HepG2 (cell line): ENCODE measurements at regions of chr7 and their contacts with region 1.

Region 1: GRCh38 chr7:73667344-73668102 is at the start of gene VPS37D:
- DNase-seq: peak; percentile 67
- ATAC-seq: peak; percentile 71
- H3K4me3 ChIP-seq: peak within 1 kb of the TSS; percentile 68 to 84 (median 77)
- H3K27ac ChIP-seq: peak within 1 kb of the TSS; percentile 94
- H3K4me1 ChIP-seq: peaks cover 48% of the 10 kb centered on the region
- H3K27me3 ChIP-seq: no peaks in the 10 kb centered on the region; a peak in 1 of 5 replicates
- CTCF ChIP-seq: peak; percentile 79
- EP300 ChIP-seq: no peak
- POLR2A ChIP-seq: no peak
- RAD21 ChIP-seq: peak; percentile 97
- total RNA-seq, gene VPS37D: 4.9 and 6.3 TPM in 2 replicates

Region 2: DNA sequence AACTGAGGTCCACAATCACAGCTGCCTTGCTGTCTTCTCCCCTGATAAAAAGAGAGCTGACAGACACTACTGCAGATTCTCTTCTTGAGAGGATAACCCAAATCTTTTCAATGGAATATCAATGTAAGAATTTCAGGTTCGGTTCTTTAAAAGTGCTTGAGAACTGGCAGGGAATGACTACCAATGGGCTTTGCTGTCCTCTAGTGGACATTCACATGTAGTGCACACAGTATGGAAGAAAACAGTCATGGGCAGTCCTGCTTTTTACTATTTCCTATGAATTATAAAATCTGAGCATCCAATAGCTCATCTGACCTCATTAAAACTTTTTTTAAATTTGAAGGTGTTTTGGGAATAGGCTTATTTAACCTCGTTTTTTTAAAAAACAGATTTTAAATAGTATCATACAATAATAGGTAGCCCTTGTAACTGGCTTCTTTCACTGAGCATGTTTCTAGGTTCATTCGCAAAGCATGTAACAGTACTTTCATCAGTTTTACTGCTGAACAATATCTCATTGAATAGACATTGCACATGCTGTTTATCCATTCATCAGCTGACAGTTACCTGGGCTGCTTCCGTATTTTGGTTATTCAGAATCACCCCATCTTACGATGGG is 215.6 kb before region 1 on chr7:
- CTCF ChIA-PET with region 1: no interaction called
- POLR2A ChIA-PET with region 1: no interaction called
- in situ Hi-C with region 1: no loop called
- intact Hi-C with region 1: no loop called
- DNase-seq: peak; percentile 57
- ATAC-seq: peak; percentile 51
- H3K4me3 ChIP-seq: no peak overlapping the region
- H3K27ac ChIP-seq: no peak overlapping the region
- H3K4me1 ChIP-seq: peaks cover 28% of the 10 kb centered on the region
- H3K27me3 ChIP-seq: no peaks in the 10 kb centered on the region
- CTCF ChIP-seq: peak; percentile 86
- EP300 ChIP-seq: no peak
- POLR2A ChIP-seq: no peak
- RAD21 ChIP-seq: peak; percentile 88

Region 3: DNA sequence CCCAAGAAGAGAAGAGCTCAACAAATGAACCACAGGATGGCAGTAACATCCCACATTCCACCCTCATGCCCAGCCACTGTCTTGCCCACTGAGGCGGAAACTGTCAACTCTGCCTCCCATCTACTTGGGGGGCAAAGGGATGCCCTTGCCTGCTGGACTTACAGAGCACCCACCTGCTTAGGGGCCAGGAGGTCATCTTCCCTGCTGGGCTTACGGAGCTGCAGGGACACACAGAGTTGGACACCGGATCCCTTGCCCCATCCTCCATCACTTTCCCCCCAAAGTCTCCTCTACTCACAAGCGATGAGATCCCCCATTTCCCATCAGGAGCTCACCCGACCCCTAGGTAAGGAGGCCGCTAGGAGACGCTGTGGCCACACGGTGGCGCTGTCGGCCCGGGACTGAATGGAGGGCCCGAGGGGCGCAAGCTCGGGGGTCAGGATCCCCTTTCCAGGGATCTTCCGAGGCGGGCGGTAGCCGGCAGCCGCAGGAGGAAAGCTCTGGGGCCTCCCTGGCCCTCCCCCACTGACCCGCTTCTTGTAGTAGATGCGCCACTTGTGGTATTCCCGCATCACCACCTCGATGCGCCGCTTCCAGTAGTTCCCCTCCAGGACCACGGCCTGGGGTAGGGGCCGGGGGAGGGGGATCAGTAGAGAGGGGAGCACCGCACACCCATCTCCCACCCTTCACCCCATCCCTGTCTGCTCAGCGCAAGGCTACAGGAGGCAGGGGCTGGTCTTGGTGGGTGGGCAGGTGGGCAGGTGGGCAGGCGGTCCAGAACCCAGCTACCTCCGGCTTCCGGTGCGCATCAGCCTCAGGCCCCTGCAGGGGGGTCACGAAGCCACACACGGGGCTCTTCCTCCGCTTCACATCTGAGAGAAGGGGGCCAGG is 60.5 kb before region 1 on chr7:
- CTCF ChIA-PET with region 1: interaction called, 12 read pairs
- POLR2A ChIA-PET with region 1: interaction called, 3 read pairs
- in situ Hi-C with region 1: loop called (anchors 5 kb)
- intact Hi-C with region 1: loop called (anchors 2 kb)
- DNase-seq: peak; percentile 33
- ATAC-seq: peak; percentile 40
- H3K4me3 ChIP-seq: no peak overlapping the region
- H3K27ac ChIP-seq: no peak overlapping the region
- H3K4me1 ChIP-seq: peaks cover 42% of the 10 kb centered on the region
- H3K27me3 ChIP-seq: no peaks in the 10 kb centered on the region
- CTCF ChIP-seq: peak; percentile 91
- EP300 ChIP-seq: no peak
- POLR2A ChIP-seq: peak in 1 of 2 experiments; percentile 25; a peak in 2 of 4 replicates
- RAD21 ChIP-seq: peak; percentile 88

Region 4: GRCh38 chr7:73612598-73613269 is 54.8 kb before region 1 on chr7:
- CTCF ChIA-PET with region 1: interaction called, 12 read pairs
- POLR2A ChIA-PET with region 1: interaction called, 10 read pairs
- in situ Hi-C with region 1: loop called (anchors 5 kb)
- intact Hi-C with region 1: loop called (anchors 2 kb)
- DNase-seq: peak; percentile 99
- ATAC-seq: peak; percentile 80
- H3K4me3 ChIP-seq: peak overlapping the region in 1 of 3 experiments; percentile 6; a peak in 1 of 6 replicates
- H3K27ac ChIP-seq: peak overlapping the region; percentile 76
- H3K4me1 ChIP-seq: peaks cover 98% of the 10 kb centered on the region
- H3K27me3 ChIP-seq: no peaks in the 10 kb centered on the region
- CTCF ChIP-seq: peak; percentile 65
- EP300 ChIP-seq: peak; percentile 75 to 94; a peak in 3 of 4 replicates
- POLR2A ChIP-seq: peak; percentile 29 to 41; a peak in 2 of 4 replicates
- RAD21 ChIP-seq: peak; percentile 73

Region 5: DNA sequence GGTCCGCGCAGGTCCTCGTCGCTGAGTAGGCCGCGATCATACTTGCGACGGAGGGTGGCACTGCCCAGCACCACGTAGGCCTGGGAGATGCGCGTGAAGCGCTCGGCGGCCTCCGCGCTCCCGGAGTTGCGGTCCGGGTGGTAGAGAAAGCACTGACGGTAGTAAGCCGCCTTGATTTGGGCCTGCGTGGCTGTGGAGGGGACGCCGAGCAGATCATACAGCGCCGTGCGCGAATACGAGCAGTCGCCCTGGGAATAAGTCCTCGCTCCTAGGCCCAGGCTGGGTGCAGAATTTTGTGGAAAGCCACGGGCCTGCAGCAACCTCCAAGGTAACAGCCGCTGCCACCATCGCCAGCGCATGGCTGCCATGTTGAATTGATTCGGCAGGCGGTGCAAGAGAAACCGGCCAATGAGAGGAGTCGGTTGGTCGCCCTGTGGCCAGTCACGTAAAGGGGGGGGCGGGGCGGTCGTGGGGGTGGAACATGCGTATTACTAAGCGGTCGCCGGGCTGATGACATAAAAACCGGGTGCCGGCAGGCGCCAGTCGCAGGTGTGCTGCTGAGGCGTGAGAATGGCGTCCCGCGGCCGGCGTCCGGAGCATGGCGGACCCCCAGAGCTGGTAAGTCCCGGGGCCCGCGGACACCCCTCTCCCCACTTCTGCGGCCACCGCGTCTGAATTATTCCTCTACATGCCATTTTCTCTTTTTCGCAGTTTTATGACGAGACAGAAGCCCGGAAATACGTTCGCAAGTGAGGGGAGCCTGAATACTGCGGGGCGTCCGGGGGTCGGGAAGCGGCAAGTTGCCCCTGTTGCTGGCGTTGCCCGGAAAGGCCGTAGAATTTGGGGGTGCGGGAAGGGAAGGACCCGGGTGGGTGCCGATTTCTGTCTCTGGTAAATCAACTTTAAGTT is 15.8 kb after region 1 on chr7 and contains the starts of genes BUD23 and DNAJC30:
- CTCF ChIA-PET with region 1: no interaction called
- POLR2A ChIA-PET with region 1: interaction called, 3 read pairs
- in situ Hi-C with region 1: no loop called
- intact Hi-C with region 1: loop called (anchors 2 kb)
- DNase-seq: peak; percentile 91
- ATAC-seq: peak; percentile 92
- H3K4me3 ChIP-seq: peak within 1 kb of the TSS; percentile 91 to 94 (median 92)
- H3K27ac ChIP-seq: peak within 1 kb of the TSS; percentile 75
- H3K4me1 ChIP-seq: peaks cover 39% of the 10 kb centered on the region
- H3K27me3 ChIP-seq: no peaks in the 10 kb centered on the region; a peak in 1 of 5 replicates
- CTCF ChIP-seq: no peak
- EP300 ChIP-seq: no peak
- POLR2A ChIP-seq: peak; percentile 89 to 90
- RAD21 ChIP-seq: no peak; the same call in 1 of the 2 replicates
- total RNA-seq, gene BUD23: 37.5 and 47.5 TPM in 2 replicates
- total RNA-seq, gene DNAJC30: 3.0 and 3.3 TPM in 2 replicates

Region 6: DNA sequence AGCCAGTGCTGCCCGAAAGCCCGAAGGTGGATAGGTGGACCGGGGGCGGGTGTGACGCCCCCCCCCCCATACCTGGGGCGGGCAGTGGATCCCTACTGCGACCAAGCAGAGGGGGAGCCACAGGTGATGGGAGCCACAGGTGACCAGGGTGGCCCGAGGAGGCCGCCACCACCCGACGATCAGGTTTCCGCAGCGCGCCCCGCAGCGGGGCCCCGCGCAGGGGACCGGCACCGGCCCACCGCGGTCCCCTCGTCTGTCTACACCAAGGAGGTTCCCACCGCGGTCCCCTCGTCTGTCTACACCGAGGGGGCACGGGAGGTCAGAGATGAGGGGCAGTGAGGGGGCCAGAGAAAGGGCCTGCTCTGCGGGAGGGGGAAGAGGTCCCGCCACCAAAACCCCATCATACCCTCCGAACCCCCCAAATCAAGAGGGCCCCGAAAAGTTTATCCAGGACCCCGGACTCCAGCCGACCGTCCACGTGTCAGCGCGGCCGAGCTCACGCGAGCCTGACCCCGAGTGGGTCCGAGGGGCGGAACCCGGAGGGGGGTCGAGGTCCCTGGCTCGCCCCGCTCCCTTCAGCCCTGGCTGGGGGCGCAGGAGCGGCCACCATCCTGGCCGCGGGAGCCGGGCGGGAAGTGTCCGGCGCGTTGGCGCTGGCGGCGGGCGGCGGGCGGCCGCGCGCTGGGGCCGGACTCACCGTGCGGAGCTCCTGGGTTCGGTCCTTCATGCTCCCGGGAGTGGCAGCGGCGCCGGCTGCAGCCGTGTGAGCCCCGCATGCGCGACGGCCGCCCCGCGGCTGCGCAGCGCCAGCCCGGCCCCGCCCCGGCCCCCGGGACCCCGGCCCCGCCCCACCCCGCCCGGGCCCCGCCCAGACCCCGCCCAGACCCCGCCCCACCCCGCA is 51.6 kb after region 1 on chr7 and contains the start of gene STX1A:
- CTCF ChIA-PET with region 1: no interaction called
- POLR2A ChIA-PET with region 1: interaction called, 5 read pairs
- in situ Hi-C with region 1: no loop called
- intact Hi-C with region 1: loop called (anchors 5 kb)
- DNase-seq: peak; percentile 40
- ATAC-seq: peak; percentile 67
- H3K4me3 ChIP-seq: peak within 1 kb of the TSS; percentile 76 to 87 (median 87)
- H3K27ac ChIP-seq: no peak within 1 kb of the TSS
- H3K4me1 ChIP-seq: peaks cover 47% of the 10 kb centered on the region
- H3K27me3 ChIP-seq: peaks cover 0 to 1% of the 10 kb centered on the region in 2 experiments; a peak in 1 of 5 replicates
- CTCF ChIP-seq: no peak
- EP300 ChIP-seq: no peak
- POLR2A ChIP-seq: peak in 1 of 2 experiments; percentile 67; a peak in 1 of 4 replicates
- RAD21 ChIP-seq: 0 out of 2 replicates have a peak, but pooled peaks have one; percentile 24
- total RNA-seq, gene STX1A: 2.9 and 6.1 TPM in 2 replicates